MCF 10A (cell line): ENCODE measurements at regions of chr10 and their contacts with region 1.

Region 1: GRCh38 chr10:102752934-102753664 is 9.4 kb downstream of the WBP1L start:
- DNase-seq: peak; percentile 63
- H3K4me3 Mint-ChIP-seq: peak overlapping the region; percentile 27
- H3K27ac Mint-ChIP-seq: peak overlapping the region; percentile 88
- H3K4me1 Mint-ChIP-seq: peaks cover 27% of the 10 kb centered on the region
- H3K27me3 Mint-ChIP-seq: no peaks in the 10 kb centered on the region
- CTCF ChIP-seq: peak; percentile 45

Region 2: DNA sequence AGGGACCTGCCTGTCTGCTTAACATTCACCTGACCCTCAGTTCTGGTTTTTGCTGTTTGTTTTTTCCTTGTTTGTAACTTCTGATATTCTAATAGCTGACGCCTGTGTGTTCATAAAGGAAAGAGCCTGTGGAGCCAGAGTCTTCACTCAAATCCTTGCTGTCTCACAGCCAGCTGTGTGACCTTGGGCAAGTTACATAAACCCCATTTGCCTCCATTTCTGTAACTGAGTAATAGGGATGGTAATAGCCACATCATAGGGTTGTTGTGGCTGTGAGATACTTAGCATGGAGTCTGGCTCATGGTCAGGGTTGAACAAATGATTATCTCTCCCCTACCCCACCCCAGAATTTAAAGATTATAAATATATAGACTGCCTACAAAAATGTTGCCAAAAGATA is 17.7 kb after region 1 on chr10:
- CTCF ChIA-PET with region 1: interaction called, 71 read pairs
- POLR2A ChIA-PET with region 1: interaction called, 120 read pairs
- intact Hi-C with region 1: no loop called
- DNase-seq: no peak
- H3K4me3 Mint-ChIP-seq: no peak overlapping the region
- H3K27ac Mint-ChIP-seq: peak overlapping the region; percentile 78
- H3K4me1 Mint-ChIP-seq: peaks cover 32% of the 10 kb centered on the region
- H3K27me3 Mint-ChIP-seq: no peaks in the 10 kb centered on the region
- CTCF ChIP-seq: no peak

Region 3: DNA sequence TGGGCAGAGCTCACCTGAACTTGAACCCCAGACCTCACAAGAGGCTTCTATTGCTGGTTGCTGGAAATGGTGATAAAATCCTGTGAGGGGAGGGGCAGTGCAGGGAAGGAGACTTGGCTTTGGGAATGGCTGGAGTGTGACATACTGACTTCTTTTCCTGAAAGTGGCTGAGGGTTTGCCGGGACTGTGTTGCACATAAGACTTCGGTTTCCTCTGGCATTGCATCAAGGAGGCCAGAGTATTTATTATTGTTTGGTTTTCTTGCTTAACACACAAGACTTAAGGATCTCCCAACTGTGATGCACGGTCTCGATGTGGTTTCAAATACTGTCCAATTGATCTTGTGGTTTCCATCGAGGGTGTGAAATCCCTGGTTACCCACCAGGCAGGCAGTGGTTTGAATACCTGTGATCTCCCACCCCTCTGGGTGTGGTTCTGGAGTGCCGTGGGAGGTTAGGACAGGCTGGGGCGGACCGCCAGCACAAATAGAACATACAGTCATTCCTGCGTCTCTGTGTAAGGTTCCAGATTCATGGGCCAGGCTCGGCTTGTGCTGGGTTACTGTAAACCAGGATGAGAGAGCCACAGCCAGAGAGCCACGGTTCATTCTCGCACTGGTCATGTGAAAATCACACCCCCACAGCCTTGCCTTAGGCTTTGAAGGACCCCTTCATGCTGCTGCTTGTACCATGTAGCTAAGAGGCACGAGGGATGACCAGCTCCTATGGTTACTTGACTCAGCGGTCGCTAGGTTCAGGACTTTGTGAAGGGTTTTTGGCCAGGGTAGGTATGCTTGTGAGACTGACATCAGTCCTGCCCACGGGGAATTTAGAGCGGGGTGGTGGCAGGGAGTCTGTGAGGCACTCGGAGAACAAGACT is 29.8 kb after region 1 on chr10:
- CTCF ChIA-PET with region 1: interaction called, 68 read pairs
- POLR2A ChIA-PET with region 1: interaction called, 120 read pairs
- intact Hi-C with region 1: loop called (anchors 2 kb)
- DNase-seq: peak; percentile 96
- H3K4me3 Mint-ChIP-seq: peak overlapping the region; percentile 64
- H3K27ac Mint-ChIP-seq: peak overlapping the region; percentile 89
- H3K4me1 Mint-ChIP-seq: peaks cover 47% of the 10 kb centered on the region
- H3K27me3 Mint-ChIP-seq: no peaks in the 10 kb centered on the region
- CTCF ChIP-seq: no peak

Region 4: GRCh38 chr10:102815790-102816549 is 62.9 kb after region 1 on chr10:
- CTCF ChIA-PET with region 1: interaction called, 11 read pairs
- POLR2A ChIA-PET with region 1: interaction called, 3 read pairs
- intact Hi-C with region 1: no loop called
- DNase-seq: no peak
- H3K4me3 Mint-ChIP-seq: no peak overlapping the region
- H3K27ac Mint-ChIP-seq: no peak overlapping the region
- H3K4me1 Mint-ChIP-seq: no peaks in the 10 kb centered on the region
- H3K27me3 Mint-ChIP-seq: no peaks in the 10 kb centered on the region
- CTCF ChIP-seq: no peak

Region 5: DNA sequence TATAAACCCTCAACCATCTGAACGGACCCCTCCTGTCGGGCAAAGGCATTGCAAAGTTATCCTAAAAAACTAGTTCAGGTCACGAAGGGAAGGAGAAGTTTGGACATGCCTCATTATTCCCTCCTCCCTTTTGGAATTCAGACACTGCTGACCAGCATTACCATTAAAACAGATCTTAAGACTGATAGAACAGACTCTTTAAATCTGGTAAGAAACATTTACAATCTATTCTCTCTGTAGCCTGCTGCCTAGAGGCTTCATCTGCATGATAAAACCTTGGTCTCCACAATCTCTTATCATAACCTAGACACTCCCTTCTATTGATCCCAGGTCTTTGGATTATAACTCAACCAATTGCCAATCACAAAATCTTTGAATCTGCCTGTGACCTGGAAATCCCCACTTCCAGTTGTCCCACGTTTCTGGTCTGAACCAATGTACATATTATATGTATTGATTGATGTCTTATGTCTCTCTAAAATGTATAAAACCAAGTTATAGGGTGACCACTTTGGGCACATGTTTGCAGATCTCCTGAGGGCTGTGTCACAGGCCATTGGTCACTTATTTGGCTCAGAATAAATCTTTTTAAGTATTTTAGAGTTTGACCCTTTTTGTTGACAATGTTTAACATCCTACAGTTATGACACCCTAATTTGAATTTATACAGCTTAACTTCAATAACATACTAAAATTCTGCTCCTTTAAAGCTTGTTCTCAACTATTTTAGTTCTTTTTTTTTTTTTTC is 141.5 kb after region 1 on chr10:
- CTCF ChIA-PET with region 1: interaction called, 10 read pairs
- POLR2A ChIA-PET with region 1: no interaction called
- intact Hi-C with region 1: no loop called
- DNase-seq: no peak
- H3K4me3 Mint-ChIP-seq: no peak overlapping the region
- H3K27ac Mint-ChIP-seq: no peak overlapping the region
- H3K4me1 Mint-ChIP-seq: no peaks in the 10 kb centered on the region
- H3K27me3 Mint-ChIP-seq: no peaks in the 10 kb centered on the region
- CTCF ChIP-seq: no peak